Caco-2 (cell line): ENCODE measurements at regions of chr16 and their contacts with region 1.

Region 1: DNA sequence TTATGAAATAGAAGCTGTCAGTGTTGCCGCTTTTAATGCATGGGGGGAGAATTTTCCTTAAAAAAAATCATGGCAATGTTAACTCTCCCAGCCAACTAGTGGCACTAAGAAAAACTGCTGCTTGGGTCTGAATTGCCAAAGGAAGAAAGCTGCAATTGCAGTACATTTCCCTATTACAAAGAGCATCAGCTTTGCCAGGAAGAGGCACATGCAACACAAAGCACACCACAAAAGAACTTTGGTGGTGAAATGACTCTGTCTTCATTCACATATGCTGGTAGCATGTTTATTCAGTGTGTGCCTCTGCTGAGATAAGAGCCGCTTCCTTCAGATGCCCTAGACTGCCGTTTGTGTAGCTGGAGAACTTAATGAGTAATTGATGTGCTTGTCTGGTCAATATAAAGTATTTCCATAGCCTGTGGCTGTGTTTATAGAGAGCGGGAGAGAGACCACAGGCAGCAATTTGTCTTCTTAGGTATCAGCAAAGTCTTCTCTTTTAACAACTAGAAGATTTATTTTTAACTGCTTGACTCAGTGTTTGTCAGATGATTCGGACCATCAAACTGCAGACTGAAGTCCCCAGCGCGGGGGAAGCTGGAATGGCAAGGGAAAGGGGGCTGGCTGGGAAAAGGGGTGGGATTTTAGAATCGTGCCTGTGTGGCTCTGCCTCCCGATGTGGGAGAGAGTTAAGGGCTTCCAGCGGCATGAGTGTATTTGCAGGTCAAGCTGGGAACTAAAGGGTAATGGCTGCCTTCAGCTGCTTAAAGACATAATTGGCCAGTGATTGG is 115.1 kb downstream of the MRTFB start:
- DNase-seq: no peak
- H3K4me3 ChIP-seq: no peak overlapping the region
- H3K4me3 Mint-ChIP-seq: peak overlapping the region; percentile 41
- H3K27ac Mint-ChIP-seq: no peak overlapping the region
- H3K4me1 ChIP-seq: peaks cover 19% of the 10 kb centered on the region
- H3K4me1 Mint-ChIP-seq: peaks cover 23% of the 10 kb centered on the region
- H3K27me3 ChIP-seq: no peaks in the 10 kb centered on the region
- H3K27me3 Mint-ChIP-seq: no peaks in the 10 kb centered on the region
- CTCF ChIP-seq: peak; percentile 22 to 30

Region 2: GRCh38 chr16:14070877-14071575 is 115.2 kb before region 1 on chr16 and contains the start of gene MRTFB:
- CTCF ChIA-PET with region 1: no interaction called
- POLR2A ChIA-PET with region 1: no interaction called
- intact Hi-C with region 1: loop called (anchors 5 kb)
- DNase-seq: peak; percentile 95
- H3K4me3 ChIP-seq: peak within 1 kb of the TSS; percentile 68
- H3K4me3 Mint-ChIP-seq: peak within 1 kb of the TSS; percentile 90
- H3K27ac Mint-ChIP-seq: peak within 1 kb of the TSS; percentile 94
- H3K4me1 ChIP-seq: peaks cover 6% of the 10 kb centered on the region; the same call in 1 of the 2 replicates
- H3K4me1 Mint-ChIP-seq: peaks cover 17% of the 10 kb centered on the region
- H3K27me3 ChIP-seq: no peaks in the 10 kb centered on the region
- H3K27me3 Mint-ChIP-seq: no peaks in the 10 kb centered on the region
- CTCF ChIP-seq: no peak
- total RNA-seq, gene MRTFB: 29.5 and 37.1 TPM in 2 replicates

Region 3: DNA sequence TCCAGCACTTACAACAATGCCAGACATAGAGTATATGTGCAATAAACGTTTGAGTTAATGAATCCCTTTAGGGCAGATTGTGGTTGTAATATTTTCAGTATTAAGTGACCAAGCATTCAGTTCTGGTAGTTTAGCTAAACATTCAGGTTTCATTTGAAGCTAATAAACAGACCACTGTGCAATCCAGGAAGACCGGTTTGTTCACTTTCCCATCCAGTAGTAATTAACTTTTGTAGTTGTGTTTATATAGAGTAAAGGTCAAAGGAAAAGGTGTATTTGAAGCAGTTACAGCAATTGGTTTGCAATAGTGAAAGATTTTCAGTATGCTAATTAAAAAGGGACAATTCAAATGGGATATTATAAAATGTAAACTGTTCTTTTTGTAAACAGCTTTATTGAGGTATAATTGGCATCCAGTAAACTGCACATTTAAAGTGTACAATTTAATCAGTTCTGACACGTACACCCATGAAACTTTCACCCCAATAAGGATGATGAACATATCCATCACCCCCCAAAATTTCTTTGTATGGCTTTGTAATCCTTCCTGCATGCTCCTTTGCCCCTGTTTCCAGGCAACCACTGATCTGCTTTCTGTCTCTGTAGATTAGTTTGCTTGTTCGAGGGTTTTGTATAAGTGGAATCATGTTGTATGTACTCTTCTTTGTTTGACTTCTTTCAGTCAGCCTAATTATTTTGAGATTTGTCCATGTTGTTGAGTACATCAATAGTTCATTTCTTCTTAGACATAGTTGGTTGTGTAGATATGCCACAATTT is 88.8 kb before region 1 on chr16:
- CTCF ChIA-PET with region 1: no interaction called
- POLR2A ChIA-PET with region 1: no interaction called
- intact Hi-C with region 1: loop called (anchors 10 kb)
- DNase-seq: peak; percentile 55 to 78
- H3K4me3 ChIP-seq: 0 out of 2 replicates have a peak overlapping the region, but pooled peaks have one; percentile 11
- H3K4me3 Mint-ChIP-seq: peak overlapping the region; percentile 68
- H3K27ac Mint-ChIP-seq: peak overlapping the region; percentile 78
- H3K4me1 ChIP-seq: peaks cover 46% of the 10 kb centered on the region
- H3K4me1 Mint-ChIP-seq: peaks cover 26% of the 10 kb centered on the region
- H3K27me3 ChIP-seq: no peaks in the 10 kb centered on the region
- H3K27me3 Mint-ChIP-seq: no peaks in the 10 kb centered on the region
- CTCF ChIP-seq: no peak